ENCODE measurements at regions of chr1 and their contacts with region 1.

Region 1: GRCh38 chr1:11645670-11646265 is 8.5 kb downstream of the FBXO2 start:
- DNase-seq: peak; percentile 79
- ATAC-seq: peak; percentile 48
- H3K4me3 ChIP-seq: no peak overlapping the region
- H3K4me3 Mint-ChIP-seq: no peak overlapping the region
- H3K27ac ChIP-seq: no peak overlapping the region
- H3K27ac Mint-ChIP-seq: no peak overlapping the region
- H3K4me1 ChIP-seq: peaks cover 12 to 16% of the 10 kb centered on the region in 2 donors
- H3K4me1 Mint-ChIP-seq: peaks cover 18% of the 10 kb centered on the region
- H3K27me3 ChIP-seq: peaks cover 0 to 3% (median 0%) of the 10 kb centered on the region in 4 experiments
- H3K27me3 Mint-ChIP-seq: no peaks in the 10 kb centered on the region
- CTCF ChIP-seq: peak; percentile 93

Region 2: DNA sequence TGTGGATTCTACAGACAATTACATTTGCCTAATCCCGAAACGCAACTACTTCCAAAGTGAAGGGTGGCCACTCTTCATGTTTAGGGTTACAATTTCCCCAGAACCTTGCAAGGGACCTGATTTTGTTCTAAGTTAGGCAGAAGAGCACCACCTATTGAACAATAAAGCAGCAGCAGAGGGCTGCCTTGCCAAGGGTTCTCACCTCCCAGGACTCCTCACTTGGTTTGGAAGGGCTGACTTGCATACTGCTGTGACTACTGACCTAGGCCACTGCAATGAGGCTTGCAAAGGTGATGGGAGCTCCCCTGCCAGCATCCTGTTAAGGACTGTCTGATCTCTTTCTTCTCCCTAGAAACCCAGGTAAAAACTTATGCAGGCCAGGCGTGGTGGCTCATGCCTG is 397.6 kb before region 1 on chr1:
- CTCF ChIA-PET with region 1: interaction called, 106 read pairs
- POLR2A ChIA-PET with region 1: no interaction called
- intact Hi-C with region 1: no loop called
- DNase-seq: no peak
- ATAC-seq: no peak
- H3K4me3 ChIP-seq: no peak overlapping the region
- H3K4me3 Mint-ChIP-seq: no peak overlapping the region
- H3K27ac ChIP-seq: no peak overlapping the region
- H3K27ac Mint-ChIP-seq: no peak overlapping the region
- H3K4me1 ChIP-seq: no peaks in the 10 kb centered on the region
- H3K4me1 Mint-ChIP-seq: no peaks in the 10 kb centered on the region
- H3K27me3 ChIP-seq: no peaks in the 10 kb centered on the region
- H3K27me3 Mint-ChIP-seq: no peaks in the 10 kb centered on the region
- CTCF ChIP-seq: no peak

Region 3: DNA sequence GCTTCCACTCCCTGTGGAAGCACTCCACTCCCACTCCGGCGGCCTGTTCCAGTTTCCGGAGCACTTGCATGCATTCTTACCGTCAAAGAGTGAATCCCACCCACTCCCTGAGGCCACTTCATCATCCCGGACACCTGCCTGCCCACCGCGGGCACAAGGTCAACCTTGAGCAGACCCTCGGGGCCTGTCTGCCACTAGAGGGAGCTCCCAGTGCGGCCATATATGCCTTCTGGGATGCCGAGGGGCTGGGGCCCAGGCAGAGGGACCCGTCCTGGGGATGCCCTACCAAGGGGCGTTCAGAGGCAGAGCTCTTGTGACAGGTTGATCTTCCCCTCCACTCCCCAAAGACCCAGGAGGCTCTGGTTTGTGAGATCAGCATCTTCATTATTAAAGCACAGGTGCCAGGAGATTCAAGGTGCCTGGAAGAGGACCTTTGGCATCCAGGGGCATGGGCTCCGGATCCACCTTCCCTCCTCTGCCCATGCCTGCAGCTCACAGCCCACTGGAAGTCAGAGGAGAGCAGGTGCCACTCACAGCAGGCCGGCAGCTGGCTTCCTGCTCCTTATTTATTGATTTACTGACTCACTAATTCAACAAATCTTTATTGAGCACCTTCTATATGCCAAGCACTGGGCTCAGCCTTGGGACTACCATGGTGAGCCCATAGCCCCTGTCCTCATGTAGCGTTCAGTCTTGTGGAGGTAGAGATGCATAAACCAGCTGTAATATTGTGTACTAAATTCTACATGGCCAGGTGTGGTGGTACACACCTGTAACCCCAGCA is 325.4 kb before region 1 on chr1:
- CTCF ChIA-PET with region 1: interaction called, 21 read pairs
- POLR2A ChIA-PET with region 1: no interaction called
- intact Hi-C with region 1: no loop called
- DNase-seq: peak; percentile 57
- ATAC-seq: peak; percentile 63
- H3K4me3 ChIP-seq: no peak overlapping the region
- H3K4me3 Mint-ChIP-seq: no peak overlapping the region
- H3K27ac ChIP-seq: no peak overlapping the region
- H3K27ac Mint-ChIP-seq: no peak overlapping the region
- H3K4me1 ChIP-seq: peaks cover 0 to 5% of the 10 kb centered on the region in 2 donors
- H3K4me1 Mint-ChIP-seq: peaks cover 4% of the 10 kb centered on the region
- H3K27me3 ChIP-seq: peaks cover 0 to 17% (median 4%) of the 10 kb centered on the region in 4 experiments
- H3K27me3 Mint-ChIP-seq: peaks cover 10% of the 10 kb centered on the region
- CTCF ChIP-seq: peak; percentile 71

Region 4: GRCh38 chr1:11478571-11479374 is 167.0 kb before region 1 on chr1 and contains the start of gene DISP3:
- CTCF ChIA-PET with region 1: interaction called, 3 read pairs
- POLR2A ChIA-PET with region 1: no interaction called
- intact Hi-C with region 1: loop called (anchors 10 kb)
- DNase-seq: peak; percentile 87
- ATAC-seq: peak; percentile 90
- H3K4me3 ChIP-seq: peak within 1 kb of the TSS in 4 of 5 experiments; percentile 48 to 69 (median 56)
- H3K4me3 Mint-ChIP-seq: peak within 1 kb of the TSS; percentile 72
- H3K27ac ChIP-seq: peak within 1 kb of the TSS in 1 of 2 donors; percentile 80
- H3K27ac Mint-ChIP-seq: no peak within 1 kb of the TSS
- H3K4me1 ChIP-seq: peaks cover 15 to 16% of the 10 kb centered on the region in 2 donors
- H3K4me1 Mint-ChIP-seq: peaks cover 13% of the 10 kb centered on the region
- H3K27me3 ChIP-seq: peaks cover 0 to 52% (median 15%) of the 10 kb centered on the region in 4 experiments
- H3K27me3 Mint-ChIP-seq: peaks cover 65% of the 10 kb centered on the region
- CTCF ChIP-seq: peak; percentile 78
- total RNA-seq, gene DISP3: 1.6 and 2.3 TPM in 2 replicates

Region 5: DNA sequence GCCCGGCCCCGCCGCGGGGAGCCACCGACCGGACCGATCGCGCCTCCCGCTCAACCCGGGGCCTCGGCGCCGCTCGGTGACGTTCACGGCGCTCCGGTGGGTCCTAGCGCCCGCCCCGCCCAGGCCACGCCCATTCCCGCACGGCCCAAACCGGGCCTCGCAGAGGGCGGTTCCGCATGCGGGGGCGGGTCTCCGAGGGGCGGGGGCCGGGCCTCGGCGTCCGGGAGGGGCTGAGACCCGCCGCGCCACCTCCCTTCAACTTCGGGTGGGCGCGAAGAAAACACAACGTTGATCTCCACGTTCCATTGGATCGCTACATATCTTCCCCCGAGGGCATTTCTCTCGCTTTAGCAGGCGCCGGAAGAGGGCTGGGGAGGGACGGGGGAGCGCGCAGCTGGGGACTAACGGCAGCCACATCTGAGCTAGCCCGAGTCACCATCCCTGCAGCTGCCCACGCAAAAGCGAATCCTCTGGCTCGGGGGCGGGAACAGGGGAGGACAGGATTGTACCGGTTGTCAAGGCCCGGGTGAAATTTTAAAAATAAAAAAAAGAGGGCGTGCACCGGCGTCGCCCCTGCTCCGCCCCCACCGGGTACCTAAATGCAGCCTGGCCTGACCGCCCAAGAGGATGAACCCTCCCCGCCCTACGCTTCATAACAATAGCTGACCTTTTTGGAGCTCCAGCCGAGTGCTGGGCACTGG is 35.5 kb after region 1 on chr1 and contains the start of gene MAD2L2:
- CTCF ChIA-PET with region 1: interaction called, 7 read pairs
- POLR2A ChIA-PET with region 1: interaction called, 3 read pairs
- intact Hi-C with region 1: loop called (anchors 1 kb)
- DNase-seq: peak; percentile 92
- ATAC-seq: peak; percentile 94
- H3K4me3 ChIP-seq: peak within 1 kb of the TSS; percentile 46 to 96 (median 89)
- H3K4me3 Mint-ChIP-seq: peak within 1 kb of the TSS; percentile 92
- H3K27ac ChIP-seq: peak within 1 kb of the TSS; percentile 51 to 77
- H3K27ac Mint-ChIP-seq: peak within 1 kb of the TSS; percentile 94
- H3K4me1 ChIP-seq: peaks cover 11 to 20% of the 10 kb centered on the region in 2 donors
- H3K4me1 Mint-ChIP-seq: peaks cover 20% of the 10 kb centered on the region
- H3K27me3 ChIP-seq: peaks cover 0 to 4% (median 0%) of the 10 kb centered on the region in 4 experiments
- H3K27me3 Mint-ChIP-seq: no peaks in the 10 kb centered on the region
- CTCF ChIP-seq: no peak
- total RNA-seq, gene MAD2L2: 27.7 and 29.0 TPM in 2 replicates

Region 6: DNA sequence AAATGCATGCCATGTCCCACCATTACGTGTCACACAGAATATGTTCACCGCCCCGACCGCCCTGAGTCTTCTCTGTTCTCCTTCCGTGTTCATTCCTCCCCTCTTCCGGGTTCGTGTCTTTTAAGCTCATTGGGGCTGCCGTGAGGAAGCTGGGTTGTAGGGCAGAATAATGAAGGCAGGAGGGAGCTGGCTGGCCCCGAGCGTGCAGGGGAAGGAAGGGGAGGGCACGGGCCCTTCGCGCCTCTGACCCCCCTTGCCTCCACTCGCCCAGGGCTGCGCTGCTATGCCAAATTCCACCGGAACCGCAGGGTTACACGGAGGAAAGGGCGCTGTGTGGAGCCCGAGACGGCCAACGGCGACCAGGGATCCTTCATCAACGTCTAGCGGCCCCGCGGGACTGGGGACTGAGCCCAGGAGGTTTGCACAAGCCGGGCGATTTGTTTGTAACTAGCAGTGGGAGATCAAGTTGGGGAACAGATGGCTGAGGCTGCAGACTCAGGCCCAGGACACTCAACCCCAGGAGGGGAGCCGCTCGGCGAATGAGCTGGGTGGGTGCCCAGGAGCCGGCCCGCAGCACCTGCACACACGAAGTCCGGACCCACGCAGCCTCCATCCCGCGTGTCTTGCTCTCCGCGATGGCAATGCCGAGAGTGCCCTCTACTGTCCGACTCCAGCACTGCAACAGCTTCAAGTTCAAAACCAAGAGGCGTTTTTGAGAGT is 73.7 kb after region 1 on chr1:
- CTCF ChIA-PET with region 1: interaction called, 231 read pairs
- POLR2A ChIA-PET with region 1: interaction called, 10 read pairs
- intact Hi-C with region 1: loop called (anchors 1 kb)
- DNase-seq: peak; percentile 91
- ATAC-seq: peak; percentile 88
- H3K4me3 ChIP-seq: peak overlapping the region in 4 of 5 experiments; percentile 43 to 67 (median 63)
- H3K4me3 Mint-ChIP-seq: peak overlapping the region; percentile 72
- H3K27ac ChIP-seq: peak overlapping the region; percentile 54 to 73
- H3K27ac Mint-ChIP-seq: peak overlapping the region; percentile 96
- H3K4me1 ChIP-seq: peaks cover 8 to 13% of the 10 kb centered on the region in 2 donors
- H3K4me1 Mint-ChIP-seq: peaks cover 13% of the 10 kb centered on the region
- H3K27me3 ChIP-seq: no peaks in the 10 kb centered on the region
- H3K27me3 Mint-ChIP-seq: no peaks in the 10 kb centered on the region
- CTCF ChIP-seq: peak; percentile 95

Region 7: DNA sequence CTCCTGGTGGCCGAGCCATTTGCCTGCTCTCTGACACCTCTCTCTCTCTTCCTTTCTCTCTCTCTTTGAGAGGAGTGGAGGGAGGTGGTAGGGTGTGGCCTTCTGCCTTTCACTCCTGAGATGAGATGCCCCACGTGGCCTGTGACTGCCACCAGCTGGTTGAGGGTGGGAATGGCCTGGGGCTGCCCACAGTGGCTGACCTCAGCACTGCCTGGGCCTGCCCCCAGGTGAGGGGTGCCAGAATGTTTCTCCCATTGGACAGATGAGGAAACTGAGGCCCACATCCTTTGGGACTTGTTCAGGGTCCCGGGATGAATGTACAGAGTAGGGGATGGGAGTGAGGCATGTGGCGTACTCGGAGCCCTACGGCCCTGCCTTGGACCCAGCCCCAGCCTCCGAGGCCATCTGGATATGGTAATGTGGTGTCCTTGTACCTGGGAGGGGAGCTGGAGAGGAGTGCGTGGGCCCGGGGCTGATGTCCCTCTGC is 103.5 kb after region 1 on chr1:
- CTCF ChIA-PET with region 1: interaction called, 10 read pairs
- POLR2A ChIA-PET with region 1: no interaction called
- intact Hi-C with region 1: no loop called
- DNase-seq: no peak
- ATAC-seq: peak; percentile 96
- H3K4me3 ChIP-seq: no peak overlapping the region
- H3K4me3 Mint-ChIP-seq: no peak overlapping the region
- H3K27ac ChIP-seq: no peak overlapping the region
- H3K27ac Mint-ChIP-seq: peak overlapping the region; percentile 15
- H3K4me1 ChIP-seq: peaks cover 0 to 4% of the 10 kb centered on the region in 2 donors
- H3K4me1 Mint-ChIP-seq: peaks cover 6% of the 10 kb centered on the region
- H3K27me3 ChIP-seq: no peaks in the 10 kb centered on the region
- H3K27me3 Mint-ChIP-seq: no peaks in the 10 kb centered on the region
- CTCF ChIP-seq: peak; percentile 65

Measured in B cell (primary cell).